ENCODE measurements at regions of chr22 and their contacts with region 1.

Region 1: DNA sequence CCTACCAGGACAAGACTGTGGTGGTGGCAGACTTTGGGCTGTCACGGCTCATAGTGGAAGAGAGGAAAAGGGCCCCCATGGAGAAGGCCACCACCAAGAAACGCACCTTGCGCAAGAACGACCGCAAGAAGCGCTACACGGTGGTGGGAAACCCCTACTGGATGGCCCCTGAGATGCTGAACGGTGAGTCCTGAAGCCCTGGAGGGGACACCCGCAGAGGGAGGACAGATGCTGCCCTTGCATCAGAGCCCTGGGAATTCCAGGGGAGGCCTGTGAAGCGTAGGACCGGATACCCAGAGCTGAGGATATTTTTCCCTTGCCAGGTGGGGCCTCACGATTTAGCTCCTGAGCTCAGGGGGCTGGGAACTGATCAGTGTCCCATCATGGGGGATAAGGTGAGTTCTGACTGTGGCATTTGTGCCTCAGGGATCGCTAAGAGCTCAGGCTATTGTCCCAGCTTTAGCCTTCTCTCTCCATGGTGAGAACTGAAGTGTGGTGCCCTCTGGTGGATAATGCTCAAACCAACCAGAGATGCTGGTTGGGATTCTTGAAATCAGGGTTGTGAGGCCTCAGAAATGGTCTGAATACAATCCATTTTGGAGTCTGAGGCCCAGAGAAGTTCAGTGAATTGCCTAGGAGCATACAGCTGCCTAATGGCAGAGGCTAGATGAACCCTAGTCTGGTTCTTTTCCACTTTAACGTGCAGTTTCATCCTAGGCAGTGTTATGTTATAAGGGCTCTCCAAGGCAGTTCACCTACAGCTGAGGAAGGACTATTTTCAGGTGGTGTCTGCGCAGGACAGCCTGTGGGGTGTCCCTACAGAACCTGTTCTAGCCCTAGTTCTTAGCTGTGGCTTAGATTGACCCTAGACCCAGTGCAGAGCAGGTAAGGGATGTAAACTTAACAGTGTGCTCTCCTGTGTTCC is 19.5 kb downstream of the PIK3IP1 start:
- DNase-seq: peak; percentile 78
- H3K4me3 ChIP-seq: no peak overlapping the region
- H3K27ac ChIP-seq: peak overlapping the region; percentile 52 to 74
- H3K4me1 ChIP-seq: peaks cover 17% of the 10 kb centered on the region
- H3K27me3 ChIP-seq: no peaks in the 10 kb centered on the region
- CTCF ChIP-seq: peak; percentile 67 to 82 (median 73)
- POLR2A ChIP-seq: no peak

Region 2: GRCh38 chr22:31206906-31207678 is 65.7 kb before region 1 on chr22:
- intact Hi-C with region 1: loop called (anchors 10 kb)
- DNase-seq: no peak
- H3K4me3 ChIP-seq: no peak overlapping the region
- H3K27ac ChIP-seq: no peak overlapping the region
- H3K4me1 ChIP-seq: no peaks in the 10 kb centered on the region
- H3K27me3 ChIP-seq: no peaks in the 10 kb centered on the region
- CTCF ChIP-seq: no peak
- POLR2A ChIP-seq: no peak

Region 3: GRCh38 chr22:31461699-31462098 is 188.9 kb after region 1 on chr22:
- intact Hi-C with region 1: no loop called
- DNase-seq: no peak
- H3K4me3 ChIP-seq: no peak overlapping the region
- H3K27ac ChIP-seq: no peak overlapping the region
- H3K4me1 ChIP-seq: no peaks in the 10 kb centered on the region
- H3K27me3 ChIP-seq: no peaks in the 10 kb centered on the region
- CTCF ChIP-seq: no peak
- POLR2A ChIP-seq: no peak

Measured in testis (tissue), 5 donors.